HEK293 (cell line): ENCODE measurements at regions of chr6 and their contacts with region 1.

Region 1: GRCh38 chr6:55445648-55446204 is 118.5 kb downstream of the GFRAL start:
- H3K4me3 ChIP-seq: no peak overlapping the region
- H3K27ac ChIP-seq: no peak overlapping the region
- H3K4me1 ChIP-seq: no peaks in the 10 kb centered on the region
- CTCF ChIP-seq: 0 out of 2 replicates have a peak, but pooled peaks have one; percentile 33

Region 2: DNA sequence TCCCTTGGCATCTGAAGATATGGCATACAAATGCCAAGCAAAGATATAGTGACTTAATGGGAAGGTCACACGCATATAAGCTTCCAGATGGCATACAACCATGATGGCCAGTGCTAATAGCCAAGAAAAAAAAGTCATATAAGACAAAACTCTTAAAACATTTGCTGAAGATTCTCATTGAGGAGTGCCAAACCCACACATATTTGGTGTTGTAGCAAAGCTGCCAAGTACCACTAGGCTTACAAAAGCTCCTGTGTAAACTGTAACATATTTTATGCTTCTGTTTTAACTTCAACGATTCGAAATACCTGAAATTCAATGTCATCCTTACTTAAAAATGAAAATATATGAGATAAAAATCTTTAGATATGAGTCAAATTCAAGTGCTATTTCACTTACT is 10.3 kb after region 1 on chr6:
- CTCF ChIA-PET with region 1: interaction called, 17 read pairs
- POLR2A ChIA-PET with region 1: no interaction called
- H3K4me3 ChIP-seq: no peak overlapping the region
- H3K27ac ChIP-seq: no peak overlapping the region
- H3K4me1 ChIP-seq: no peaks in the 10 kb centered on the region
- CTCF ChIP-seq: no peak

Region 3: DNA sequence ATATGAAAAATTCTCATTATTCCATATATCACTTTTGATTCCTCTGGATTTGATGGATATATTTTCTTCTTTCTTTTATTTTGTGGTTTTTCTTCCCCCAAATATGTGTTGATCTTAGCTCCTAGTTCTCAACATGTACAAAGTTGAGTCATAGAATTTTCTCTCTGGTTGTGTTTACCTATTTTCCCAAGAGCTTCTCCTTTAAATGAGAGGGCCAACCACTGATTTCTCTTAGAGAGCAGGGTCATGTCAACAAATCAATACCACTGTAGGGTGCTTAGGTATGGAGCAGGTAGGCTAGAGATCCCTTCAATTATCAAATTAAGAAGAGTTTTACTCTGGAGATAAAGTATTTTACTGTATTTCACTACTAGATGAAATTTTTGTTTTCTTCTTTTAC is 283.9 kb after region 1 on chr6:
- CTCF ChIA-PET with region 1: no interaction called
- POLR2A ChIA-PET with region 1: no interaction called
- H3K4me3 ChIP-seq: no peak overlapping the region
- H3K27ac ChIP-seq: no peak overlapping the region
- H3K4me1 ChIP-seq: no peaks in the 10 kb centered on the region
- CTCF ChIP-seq: no peak

Region 4: GRCh38 chr6:55941702-55942101 is 496.0 kb after region 1 on chr6:
- CTCF ChIA-PET with region 1: interaction called, 20 read pairs
- POLR2A ChIA-PET with region 1: no interaction called
- H3K4me3 ChIP-seq: no peak overlapping the region
- H3K27ac ChIP-seq: no peak overlapping the region
- H3K4me1 ChIP-seq: no peaks in the 10 kb centered on the region
- CTCF ChIP-seq: no peak

Region 5: GRCh38 chr6:55963301-55963700 is 517.6 kb after region 1 on chr6:
- CTCF ChIA-PET with region 1: interaction called, 101 read pairs
- POLR2A ChIA-PET with region 1: no interaction called
- H3K4me3 ChIP-seq: no peak overlapping the region
- H3K27ac ChIP-seq: no peak overlapping the region
- H3K4me1 ChIP-seq: no peaks in the 10 kb centered on the region
- CTCF ChIP-seq: no peak

Region 6: DNA sequence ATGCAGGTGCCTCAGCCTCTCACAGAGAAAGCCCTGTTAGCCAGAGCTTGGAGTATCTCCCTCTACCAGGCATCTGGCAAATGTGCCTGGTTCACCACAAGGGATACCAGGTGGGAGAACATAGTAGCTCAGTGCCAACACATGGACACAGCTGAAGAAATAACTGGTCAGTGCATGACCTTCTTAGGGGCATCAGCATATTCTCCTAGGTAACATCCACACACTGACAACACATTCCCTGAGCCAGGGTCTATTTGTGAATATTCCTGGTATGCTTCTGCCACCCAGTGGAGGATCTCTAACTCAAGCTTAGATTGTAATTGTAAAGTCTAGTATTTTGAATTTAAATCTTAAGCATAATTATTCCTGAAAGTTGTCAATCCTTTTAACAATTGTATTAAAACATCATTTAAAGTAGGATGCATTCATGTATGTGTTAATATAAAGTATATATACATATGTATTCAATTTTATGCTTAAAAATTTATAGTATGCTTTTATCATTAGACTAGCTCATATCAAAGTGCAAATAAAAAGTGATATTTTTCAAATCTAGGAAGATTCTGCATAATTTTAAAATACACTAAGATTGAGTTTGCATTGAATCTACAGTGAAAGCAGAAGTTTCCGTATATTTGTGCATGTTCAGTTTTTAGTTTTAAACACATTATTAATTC is 846.9 kb after region 1 on chr6:
- CTCF ChIA-PET with region 1: interaction called, 82 read pairs
- POLR2A ChIA-PET with region 1: no interaction called
- H3K4me3 ChIP-seq: no peak overlapping the region
- H3K27ac ChIP-seq: no peak overlapping the region
- H3K4me1 ChIP-seq: no peaks in the 10 kb centered on the region; the same call in 1 of the 2 replicates
- CTCF ChIP-seq: peak; percentile 62; the same call in 1 of the 2 replicates